CD8-positive, alpha-beta T cell (primary cell): ENCODE measurements at regions of chr11 and their contacts with region 1.

Region 1: DNA sequence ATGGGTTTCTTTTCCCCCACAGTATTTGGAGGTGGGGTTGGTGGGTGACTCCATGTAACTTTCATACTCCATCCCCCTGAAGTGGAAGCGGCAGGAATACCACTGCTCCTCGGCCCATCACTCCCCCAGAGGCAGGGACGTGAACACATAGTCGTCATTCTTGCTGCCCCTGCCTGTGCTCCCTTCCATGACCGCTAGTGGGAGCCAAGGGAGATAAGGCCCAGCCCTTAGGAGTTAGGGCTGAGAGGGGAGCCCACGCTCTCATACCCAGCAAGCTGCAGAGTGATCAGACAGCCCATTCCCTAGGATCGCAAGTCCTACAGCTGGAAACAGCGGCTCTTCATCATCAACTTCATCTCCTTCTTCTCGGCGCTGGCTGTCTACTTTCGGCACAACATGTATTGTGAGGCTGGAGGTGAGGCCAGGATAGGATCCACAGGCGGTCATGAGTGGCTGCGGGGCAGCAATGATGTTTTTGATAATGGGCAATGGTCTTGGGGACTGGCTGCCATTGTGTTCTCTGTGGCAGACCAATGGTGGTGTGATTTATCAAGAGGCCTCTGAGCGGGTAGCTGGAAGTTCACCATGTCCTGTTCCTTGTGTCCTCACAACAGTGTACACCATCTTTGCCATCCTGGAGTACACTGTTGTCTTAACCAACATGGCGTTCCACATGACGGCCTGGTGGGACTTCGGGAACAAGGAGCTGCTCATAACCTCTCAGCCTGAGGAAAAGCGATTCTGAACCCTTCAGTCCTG is 15.9 kb downstream of the RHOG start:
- DNase-seq: peak; percentile 67 to 90 (median 85)
- ATAC-seq: peak; percentile 99
- H3K4me3 ChIP-seq: no peak overlapping the region
- H3K4me3 Mint-ChIP-seq: peak overlapping the region; percentile 37
- H3K27ac ChIP-seq: peak overlapping the region in 1 of 2 experiments; percentile 56
- H3K27ac Mint-ChIP-seq: peak overlapping the region; percentile 89
- H3K4me1 ChIP-seq: peaks cover 10% of the 10 kb centered on the region
- H3K4me1 Mint-ChIP-seq: peaks cover 40% of the 10 kb centered on the region
- H3K27me3 ChIP-seq: no peaks in the 10 kb centered on the region
- H3K27me3 Mint-ChIP-seq: no peaks in the 10 kb centered on the region
- CTCF ChIP-seq: peak; percentile 68

Region 2: GRCh38 chr11:3665336-3666022 is 159.4 kb before region 1 on chr11:
- CTCF ChIA-PET with region 1: no interaction called
- POLR2A ChIA-PET with region 1: no interaction called
- intact Hi-C with region 1: no loop called
- DNase-seq: no peak
- ATAC-seq: no peak
- H3K4me3 ChIP-seq: no peak overlapping the region
- H3K4me3 Mint-ChIP-seq: no peak overlapping the region
- H3K27ac ChIP-seq: no peak overlapping the region
- H3K27ac Mint-ChIP-seq: peak overlapping the region; percentile 32
- H3K4me1 ChIP-seq: no peaks in the 10 kb centered on the region
- H3K4me1 Mint-ChIP-seq: no peaks in the 10 kb centered on the region
- H3K27me3 ChIP-seq: no peaks in the 10 kb centered on the region
- H3K27me3 Mint-ChIP-seq: no peaks in the 10 kb centered on the region
- CTCF ChIP-seq: no peak

Region 3: DNA sequence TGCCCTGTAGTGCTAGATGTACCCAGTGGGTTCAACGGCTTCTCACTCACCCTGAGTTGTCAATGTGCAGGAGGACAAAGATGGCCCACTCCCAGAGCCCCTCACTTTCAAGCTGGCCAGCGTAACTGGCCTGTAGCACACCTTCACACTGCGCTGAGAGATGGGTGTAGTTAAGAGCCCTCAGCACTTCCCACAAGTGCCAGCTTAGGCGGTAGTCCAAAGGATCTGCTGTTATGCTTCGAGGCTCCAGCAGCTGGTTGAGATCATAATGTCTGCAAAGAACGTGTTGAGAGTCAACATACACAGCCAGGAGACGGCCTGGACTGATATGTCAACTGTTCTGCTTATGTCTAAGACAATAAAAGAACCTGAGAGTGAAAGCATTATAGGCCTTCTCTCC is 139.0 kb before region 1 on chr11:
- CTCF ChIA-PET with region 1: no interaction called
- POLR2A ChIA-PET with region 1: no interaction called
- intact Hi-C with region 1: no loop called
- DNase-seq: no peak
- ATAC-seq: no peak
- H3K4me3 ChIP-seq: no peak overlapping the region
- H3K4me3 Mint-ChIP-seq: no peak overlapping the region
- H3K27ac ChIP-seq: no peak overlapping the region
- H3K27ac Mint-ChIP-seq: no peak overlapping the region
- H3K4me1 ChIP-seq: no peaks in the 10 kb centered on the region
- H3K4me1 Mint-ChIP-seq: no peaks in the 10 kb centered on the region
- H3K27me3 ChIP-seq: no peaks in the 10 kb centered on the region
- H3K27me3 Mint-ChIP-seq: no peaks in the 10 kb centered on the region
- CTCF ChIP-seq: no peak

Region 4: GRCh38 chr11:3880724-3881123 is 55.8 kb after region 1 on chr11:
- CTCF ChIA-PET with region 1: no interaction called
- POLR2A ChIA-PET with region 1: no interaction called
- intact Hi-C with region 1: loop called in 1 of 2 experiments (anchors 2 kb)
- DNase-seq: no peak
- ATAC-seq: no peak
- H3K4me3 ChIP-seq: no peak overlapping the region
- H3K4me3 Mint-ChIP-seq: no peak overlapping the region
- H3K27ac ChIP-seq: peak overlapping the region in 1 of 2 experiments; percentile 66
- H3K27ac Mint-ChIP-seq: peak overlapping the region; percentile 82
- H3K4me1 ChIP-seq: peaks cover 60% of the 10 kb centered on the region
- H3K4me1 Mint-ChIP-seq: peaks cover 80% of the 10 kb centered on the region
- H3K27me3 ChIP-seq: no peaks in the 10 kb centered on the region
- H3K27me3 Mint-ChIP-seq: no peaks in the 10 kb centered on the region
- CTCF ChIP-seq: no peak

Region 5: DNA sequence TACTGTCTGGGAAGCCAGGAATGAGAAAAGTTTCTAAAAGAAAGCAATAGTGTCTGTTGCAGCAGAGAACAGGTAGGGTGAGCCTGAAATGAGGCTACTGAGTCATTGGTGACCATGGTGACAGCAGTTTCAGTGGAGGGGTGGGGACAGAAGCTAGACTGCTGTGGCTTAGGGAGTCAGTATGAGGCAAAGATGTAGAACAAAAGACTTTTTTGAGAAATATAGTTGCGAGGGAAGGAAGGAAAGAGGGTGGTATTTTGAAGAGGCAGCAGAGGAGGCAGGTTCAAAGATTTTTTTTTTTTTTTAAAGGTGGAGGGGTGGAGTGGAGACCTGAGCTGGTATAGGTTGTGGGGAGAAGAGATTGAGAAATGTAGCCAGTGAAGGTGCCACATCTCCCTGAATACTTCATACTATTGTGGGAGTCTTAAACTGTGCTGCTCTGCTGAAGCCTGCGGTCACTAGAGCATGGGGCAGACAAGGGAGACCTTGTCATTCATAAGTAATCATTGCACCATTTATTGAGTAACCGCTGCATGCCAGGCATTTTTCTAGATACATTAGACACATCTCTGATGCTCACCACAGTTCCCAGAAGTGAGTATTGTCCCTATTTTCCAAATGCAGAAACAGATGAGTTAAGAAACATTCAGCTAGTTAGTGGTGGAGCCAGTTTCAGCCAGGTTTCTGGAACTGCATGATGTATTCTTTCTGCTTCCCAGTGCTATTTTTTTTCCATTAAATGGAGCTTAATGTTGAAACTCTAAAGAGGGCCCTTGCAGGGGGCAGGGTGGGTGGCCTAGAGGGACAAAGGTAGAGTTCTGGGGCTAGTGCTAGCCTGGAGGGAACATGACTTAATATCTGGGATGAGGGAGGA is 80.4 kb after region 1 on chr11:
- CTCF ChIA-PET with region 1: no interaction called
- POLR2A ChIA-PET with region 1: no interaction called
- intact Hi-C with region 1: no loop called
- DNase-seq: peak; percentile 18 to 84 (median 68)
- ATAC-seq: peak; percentile 94
- H3K4me3 ChIP-seq: no peak overlapping the region
- H3K4me3 Mint-ChIP-seq: peak overlapping the region; percentile 16
- H3K27ac ChIP-seq: peak overlapping the region; percentile 26 to 51
- H3K27ac Mint-ChIP-seq: peak overlapping the region; percentile 89
- H3K4me1 ChIP-seq: peaks cover 77% of the 10 kb centered on the region
- H3K4me1 Mint-ChIP-seq: peaks cover 86% of the 10 kb centered on the region
- H3K27me3 ChIP-seq: no peaks in the 10 kb centered on the region
- H3K27me3 Mint-ChIP-seq: no peaks in the 10 kb centered on the region
- CTCF ChIP-seq: no peak

Region 6: GRCh38 chr11:4522339-4522738 is 697.4 kb after region 1 on chr11:
- CTCF ChIA-PET with region 1: no interaction called
- POLR2A ChIA-PET with region 1: no interaction called
- intact Hi-C with region 1: no loop called
- DNase-seq: peak in 1 of 9 experiments; percentile 12
- ATAC-seq: no peak
- H3K4me3 ChIP-seq: no peak overlapping the region
- H3K4me3 Mint-ChIP-seq: no peak overlapping the region
- H3K27ac ChIP-seq: no peak overlapping the region
- H3K27ac Mint-ChIP-seq: no peak overlapping the region
- H3K4me1 ChIP-seq: peaks cover 6% of the 10 kb centered on the region
- H3K4me1 Mint-ChIP-seq: peaks cover 8% of the 10 kb centered on the region
- H3K27me3 ChIP-seq: no peaks in the 10 kb centered on the region
- H3K27me3 Mint-ChIP-seq: peaks cover 18% of the 10 kb centered on the region
- CTCF ChIP-seq: no peak